ENCODE measurements at regions of chr13 and their contacts with region 1.

Region 1: DNA sequence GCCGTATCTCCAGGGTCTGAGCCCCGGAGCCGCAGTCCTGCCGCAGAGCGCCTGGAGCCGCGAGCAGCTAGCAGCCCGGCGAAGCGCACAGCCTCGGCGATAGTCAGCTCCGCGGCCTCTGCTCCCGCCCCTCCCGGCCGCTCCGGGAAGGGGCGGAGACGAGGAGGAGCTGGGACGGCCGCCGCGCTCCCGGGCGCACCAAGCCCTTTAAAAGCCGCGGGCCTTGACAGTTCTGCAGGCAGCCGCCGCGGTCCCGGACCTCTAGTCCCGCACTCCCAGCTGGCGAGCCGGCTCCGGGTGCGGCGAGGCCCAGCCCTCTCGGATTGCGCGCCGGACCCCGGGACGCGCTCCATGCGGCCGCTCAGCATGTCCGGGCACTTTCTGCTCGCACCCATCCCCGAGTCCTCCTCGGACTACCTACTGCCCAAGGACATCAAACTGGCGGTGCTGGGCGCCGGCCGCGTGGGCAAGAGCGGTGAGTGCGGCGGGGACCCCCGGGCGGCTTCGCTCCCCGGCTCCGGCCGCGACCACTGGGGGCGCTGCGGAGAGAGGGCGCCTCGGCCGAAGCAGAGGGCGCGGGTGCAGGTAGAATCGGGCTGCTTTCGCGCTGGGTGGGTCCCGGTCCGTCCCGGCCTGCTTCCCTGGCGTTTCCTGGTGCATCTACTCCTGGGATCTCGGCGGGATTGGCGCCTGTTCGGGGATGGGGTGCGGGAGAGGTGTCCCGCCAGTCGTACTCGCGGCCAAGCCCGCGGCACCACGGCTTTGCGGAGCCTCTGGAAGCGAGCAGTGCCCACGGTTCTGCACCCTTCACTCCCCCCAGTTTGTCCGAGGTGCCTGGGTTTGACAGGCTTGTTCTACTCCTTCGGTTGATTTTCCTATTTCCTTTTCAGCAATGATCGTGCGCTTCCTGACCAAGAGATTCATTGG is at the start of gene RASL11A:
- DNase-seq: peak; percentile 86 to 93
- H3K4me3 ChIP-seq: peak within 1 kb of the TSS; percentile 70 to 87
- H3K27ac ChIP-seq: peak within 1 kb of the TSS; percentile 83 to 93
- H3K4me1 ChIP-seq: peaks cover 4 to 35% (median 24%) of the 10 kb centered on the region in 4 donors
- H3K27me3 ChIP-seq: no peaks in the 10 kb centered on the region
- CTCF ChIP-seq: peak; percentile 94 to 95

Region 2: DNA sequence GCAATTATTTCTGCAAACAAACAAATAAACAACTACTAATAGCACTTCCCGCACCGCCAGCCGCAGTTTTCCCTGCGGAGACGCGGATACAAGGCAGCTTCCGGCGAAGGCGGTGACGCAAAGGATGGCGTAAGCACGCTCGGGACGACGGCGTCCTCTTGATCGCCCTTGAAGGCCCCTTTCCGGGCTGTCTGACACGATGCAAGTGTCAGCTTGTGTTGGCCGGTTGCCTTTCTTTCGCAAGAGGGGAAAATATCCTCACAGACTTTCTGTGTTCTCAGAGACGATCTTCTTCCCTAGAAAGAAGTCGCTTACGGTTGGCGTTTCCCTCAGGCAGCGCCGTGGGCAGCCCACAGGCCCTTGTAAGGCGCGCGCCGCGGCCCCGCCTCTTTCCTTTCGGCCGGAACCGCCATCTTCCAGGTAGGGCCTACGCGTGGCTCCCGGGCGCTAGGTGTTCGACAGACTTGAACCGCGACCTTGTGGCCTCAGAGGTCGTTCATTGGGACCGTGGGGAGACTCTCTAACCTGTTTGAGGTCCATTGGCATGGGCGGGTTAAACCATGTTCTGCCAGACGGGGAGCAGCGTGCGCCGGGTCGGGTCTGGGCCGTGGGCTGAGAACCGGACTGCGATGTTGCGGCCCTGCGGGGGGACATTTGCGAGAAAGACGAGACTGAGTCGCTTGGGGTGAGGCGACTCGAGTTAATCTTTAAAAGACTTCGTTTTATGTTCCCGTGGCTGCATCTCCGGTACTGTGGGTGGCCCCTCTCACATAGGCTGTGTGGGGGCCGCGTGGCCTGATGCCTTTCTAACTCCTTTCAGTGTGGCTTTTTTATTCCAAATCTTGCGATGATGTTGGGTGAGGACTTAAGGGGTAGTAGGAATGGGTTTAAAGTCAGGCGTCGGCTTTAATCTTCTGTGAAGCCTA is 19.4 kb before region 1 on chr13 and contains the start of gene RPL21:
- intact Hi-C with region 1: loop called (anchors 1 kb)
- DNase-seq: peak; percentile 95 to 98
- H3K4me3 ChIP-seq: peak within 1 kb of the TSS; percentile 73 to 93
- H3K27ac ChIP-seq: peak within 1 kb of the TSS; percentile 94 to 95
- H3K4me1 ChIP-seq: peaks cover 0 to 40% (median 29%) of the 10 kb centered on the region in 4 donors
- H3K27me3 ChIP-seq: no peaks in the 10 kb centered on the region
- CTCF ChIP-seq: no peak

Region 3: DNA sequence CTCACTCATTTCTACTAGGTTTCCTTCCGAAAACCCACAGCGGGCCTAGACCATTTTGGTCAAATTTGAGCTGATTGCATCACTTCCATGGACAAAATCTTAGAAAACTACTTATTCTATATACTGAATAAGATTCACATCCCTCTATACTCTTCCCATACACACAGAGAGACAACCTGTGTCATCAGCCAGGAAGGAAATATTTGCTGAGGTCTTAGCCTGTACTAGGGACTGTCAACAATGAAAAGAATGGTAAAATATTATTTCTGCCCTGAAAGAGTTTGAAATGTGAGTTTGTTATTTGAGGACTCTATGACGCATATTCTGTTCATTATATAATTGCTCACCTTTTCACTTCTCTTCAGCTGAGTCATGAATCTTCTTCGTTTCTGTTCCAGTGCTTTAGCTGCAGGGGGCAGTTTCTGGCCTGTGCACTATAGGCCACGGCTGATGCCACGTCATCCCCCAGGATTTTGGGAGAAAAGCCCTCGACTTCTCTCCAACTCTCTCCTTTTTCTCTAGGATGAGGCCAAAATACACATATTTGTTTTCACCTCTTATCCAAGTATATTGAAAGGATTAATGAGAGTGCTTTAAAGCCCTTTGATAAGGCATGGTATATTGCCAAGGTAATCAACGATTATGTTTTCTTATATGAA is 569.1 kb after region 1 on chr13:
- intact Hi-C with region 1: no loop called
- DNase-seq: no peak
- H3K4me3 ChIP-seq: no peak overlapping the region
- H3K27ac ChIP-seq: no peak overlapping the region
- H3K4me1 ChIP-seq: no peaks in the 10 kb centered on the region
- H3K27me3 ChIP-seq: peaks cover 0 to 21% of the 10 kb centered on the region in 2 donors
- CTCF ChIP-seq: no peak

Measured in tibial artery (tissue), 4 donors.